GM13977 (cell line): ENCODE measurements at regions of chr1 and their contacts with region 1.

Region 1: DNA sequence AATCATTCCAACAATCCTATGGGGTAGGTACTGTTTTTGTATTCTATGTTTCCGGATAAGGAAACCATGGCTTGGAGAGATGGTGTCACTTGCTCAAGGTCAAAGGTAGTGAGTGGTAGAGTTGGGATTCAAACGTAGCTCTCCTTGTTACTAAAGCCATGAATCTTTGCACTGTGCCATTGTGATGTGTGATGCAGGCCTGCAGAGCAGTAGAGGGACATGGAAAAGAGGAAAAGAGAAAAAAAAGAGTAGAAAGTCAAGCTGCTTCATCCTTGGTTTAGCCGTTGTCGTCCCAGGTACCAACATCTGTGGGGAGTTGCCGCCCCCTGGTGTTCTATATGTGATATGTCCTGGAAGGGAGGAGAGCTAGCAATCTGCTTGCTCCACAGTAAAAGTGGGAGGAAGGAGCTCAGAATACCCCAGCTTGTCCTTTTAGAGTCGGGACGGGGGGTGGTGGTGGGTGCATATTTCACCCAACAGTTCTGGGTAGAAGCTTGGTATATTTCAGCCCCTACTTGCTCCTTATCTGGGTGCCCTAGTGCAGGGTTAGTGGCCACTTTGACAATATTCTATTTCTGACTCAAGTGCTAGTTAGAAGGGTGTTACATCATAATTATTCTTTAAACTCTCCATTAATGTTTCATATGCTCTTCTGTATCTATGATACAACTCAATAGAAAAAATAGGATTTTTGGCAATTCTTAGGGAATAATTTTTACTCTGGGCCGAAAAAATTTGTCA is 98.4 kb downstream of the EBNA1BP2 start:
- DNase-seq: peak; percentile 81
- CTCF ChIP-seq: peak; percentile 78

Region 2: GRCh38 chr1:42766741-42767509 is 306.7 kb before region 1 on chr1 and contains the starts of genes C1orf50 and P3H1:
- in situ Hi-C with region 1: loop called (anchors 25 kb)
- DNase-seq: peak; percentile 98
- CTCF ChIP-seq: no peak

Region 3: DNA sequence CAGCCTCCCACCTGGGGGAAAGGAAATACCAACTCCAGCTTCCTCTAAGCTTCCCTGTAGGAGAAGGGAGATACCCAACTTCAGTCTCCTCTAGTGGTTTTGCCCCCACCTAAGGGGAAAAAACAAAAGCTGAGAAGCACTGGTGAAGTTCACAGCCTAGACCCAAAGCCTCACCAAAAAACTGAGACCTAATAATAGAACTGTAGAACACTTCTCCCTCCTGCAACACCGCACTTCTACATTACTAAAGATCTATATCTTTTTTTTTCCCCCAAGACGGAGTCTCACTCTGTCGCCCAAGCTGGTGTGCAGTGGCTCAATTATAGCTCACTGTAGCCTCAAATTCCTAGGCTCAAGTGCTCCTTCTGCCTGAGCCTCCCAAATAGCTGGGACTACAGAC is 158.2 kb before region 1 on chr1:
- in situ Hi-C with region 1: loop called (anchors 5 kb)
- DNase-seq: no peak
- CTCF ChIP-seq: no peak